ENCODE measurements at regions of chr3 and their contacts with region 1.

Region 1: DNA sequence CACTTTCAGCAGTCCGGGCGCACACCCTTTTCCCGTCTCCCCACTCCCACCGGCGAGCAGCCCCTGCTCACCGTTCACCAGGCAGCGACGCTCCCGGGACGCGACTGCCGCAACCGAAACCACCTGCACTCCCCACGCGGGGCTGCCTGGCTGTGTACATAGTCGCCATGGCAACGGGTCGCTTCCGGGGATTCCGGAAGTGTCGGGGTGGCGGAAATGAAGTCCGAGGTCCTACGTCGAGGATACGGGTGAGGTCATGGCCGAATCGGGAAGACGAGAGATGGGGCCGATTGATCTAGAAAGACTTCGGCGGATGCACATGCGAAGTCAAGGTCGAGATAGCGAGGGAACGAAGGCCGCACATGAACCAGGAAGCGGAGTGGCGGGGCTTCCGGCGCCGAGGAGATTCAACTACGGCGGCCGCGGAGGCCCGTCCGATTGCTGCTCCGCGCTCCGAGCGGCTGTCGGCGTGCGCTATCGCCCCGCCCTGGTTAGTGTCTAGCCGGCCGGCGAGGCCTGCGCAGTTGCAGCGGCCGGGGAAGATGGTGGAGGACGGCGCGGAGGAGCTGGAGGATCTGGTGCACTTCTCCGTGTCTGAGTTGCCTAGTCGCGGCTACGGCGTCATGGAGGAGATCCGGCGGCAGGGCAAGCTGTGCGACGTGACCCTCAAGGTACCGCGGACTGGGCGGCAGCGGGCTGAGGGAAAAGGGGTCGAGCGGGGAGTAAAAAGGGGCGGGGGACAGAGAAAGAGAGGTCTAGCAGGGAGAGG is at the starts of genes KIF9 and KLHL18:
- DNase-seq: peak; percentile 97 to 98
- ATAC-seq: peak; percentile 98
- H3K4me3 ChIP-seq: peak within 1 kb of the TSS; percentile 21 to 65
- H3K27ac ChIP-seq: peak within 1 kb of the TSS; percentile 36 to 88
- H3K4me1 ChIP-seq: no peaks in the 10 kb centered on the region
- H3K27me3 ChIP-seq: no peaks in the 10 kb centered on the region
- total RNA-seq, gene KIF9: 6.5 to 6.7 TPM
- total RNA-seq, gene KLHL18: 22.9 to 26.7 TPM

Region 2: DNA sequence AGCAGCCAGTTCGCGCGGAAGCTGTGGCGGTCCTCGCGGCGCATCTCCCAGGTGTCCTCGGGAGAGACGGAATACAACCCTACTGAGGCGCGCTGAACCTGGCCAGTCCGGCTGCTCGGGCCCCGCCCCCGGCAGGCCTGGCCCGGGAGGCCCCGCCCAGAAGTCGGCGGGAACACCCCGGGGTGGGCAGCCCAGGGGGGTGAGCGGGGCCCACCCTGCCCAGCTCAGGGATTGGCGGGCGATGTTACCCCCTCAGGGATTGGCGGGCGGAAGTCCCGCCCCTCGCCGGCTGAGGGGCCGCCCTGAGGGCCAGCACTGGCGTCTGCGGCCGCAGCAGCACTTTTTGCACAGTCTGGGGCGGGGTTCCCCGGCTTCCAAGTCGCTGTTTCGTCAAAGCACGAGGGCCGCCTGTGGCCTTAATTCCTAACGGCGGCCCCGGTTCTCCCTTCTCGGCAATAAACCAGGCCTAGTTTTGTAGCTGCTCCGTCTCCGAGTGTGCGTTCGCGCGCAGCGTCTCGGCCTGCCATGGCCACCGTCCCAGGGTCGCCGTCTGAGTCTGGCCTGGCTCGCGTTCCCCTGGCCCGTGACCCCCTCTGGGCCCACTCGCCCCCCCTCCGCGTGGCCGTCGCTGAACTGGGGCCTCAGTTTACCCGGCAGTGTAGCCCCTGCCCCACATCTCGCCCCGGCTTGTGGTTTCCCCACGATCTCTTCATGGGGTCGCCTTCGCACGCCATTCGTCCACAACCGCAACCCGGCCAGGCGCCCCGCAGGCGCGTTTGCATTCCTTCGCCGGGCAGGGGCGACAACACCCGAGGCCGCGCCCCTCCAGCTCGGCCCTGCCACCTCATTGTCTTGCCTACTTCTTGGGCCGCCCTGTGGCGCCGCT is 273.1 kb before region 1 on chr3:
- intact Hi-C with region 1: loop called in 1 of 2 experiments (anchors 1 kb)
- DNase-seq: peak; percentile 94 to 95
- ATAC-seq: peak; percentile 95
- H3K4me3 ChIP-seq: peak overlapping the region; percentile 7 to 12
- H3K27ac ChIP-seq: peak overlapping the region in 1 of 2 donors; percentile 83
- H3K4me1 ChIP-seq: no peaks in the 10 kb centered on the region
- H3K27me3 ChIP-seq: no peaks in the 10 kb centered on the region

Region 3: DNA sequence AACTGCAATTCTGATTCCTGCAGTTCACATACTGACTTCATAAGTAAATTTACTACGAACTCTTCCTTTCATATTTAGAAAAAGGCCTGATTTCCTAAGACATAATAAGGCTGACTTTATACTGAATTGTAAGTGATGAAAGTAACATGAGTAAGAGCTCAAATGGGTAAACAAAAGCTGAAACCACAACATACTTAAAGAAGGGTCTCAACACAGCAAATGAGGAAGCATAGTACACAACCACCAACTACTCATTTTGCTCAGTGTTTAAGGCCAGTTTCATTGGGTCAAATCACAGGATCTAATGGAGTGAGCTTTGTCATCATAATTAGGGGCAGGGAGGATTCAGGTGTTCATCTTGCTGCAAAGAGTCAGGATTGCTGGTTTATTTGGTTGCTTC is 200.1 kb before region 1 on chr3:
- intact Hi-C with region 1: no loop called
- DNase-seq: no peak
- ATAC-seq: no peak
- H3K4me3 ChIP-seq: no peak overlapping the region
- H3K27ac ChIP-seq: no peak overlapping the region
- H3K4me1 ChIP-seq: peaks cover 0 to 2% of the 10 kb centered on the region in 2 donors
- H3K27me3 ChIP-seq: no peaks in the 10 kb centered on the region

Region 4: DNA sequence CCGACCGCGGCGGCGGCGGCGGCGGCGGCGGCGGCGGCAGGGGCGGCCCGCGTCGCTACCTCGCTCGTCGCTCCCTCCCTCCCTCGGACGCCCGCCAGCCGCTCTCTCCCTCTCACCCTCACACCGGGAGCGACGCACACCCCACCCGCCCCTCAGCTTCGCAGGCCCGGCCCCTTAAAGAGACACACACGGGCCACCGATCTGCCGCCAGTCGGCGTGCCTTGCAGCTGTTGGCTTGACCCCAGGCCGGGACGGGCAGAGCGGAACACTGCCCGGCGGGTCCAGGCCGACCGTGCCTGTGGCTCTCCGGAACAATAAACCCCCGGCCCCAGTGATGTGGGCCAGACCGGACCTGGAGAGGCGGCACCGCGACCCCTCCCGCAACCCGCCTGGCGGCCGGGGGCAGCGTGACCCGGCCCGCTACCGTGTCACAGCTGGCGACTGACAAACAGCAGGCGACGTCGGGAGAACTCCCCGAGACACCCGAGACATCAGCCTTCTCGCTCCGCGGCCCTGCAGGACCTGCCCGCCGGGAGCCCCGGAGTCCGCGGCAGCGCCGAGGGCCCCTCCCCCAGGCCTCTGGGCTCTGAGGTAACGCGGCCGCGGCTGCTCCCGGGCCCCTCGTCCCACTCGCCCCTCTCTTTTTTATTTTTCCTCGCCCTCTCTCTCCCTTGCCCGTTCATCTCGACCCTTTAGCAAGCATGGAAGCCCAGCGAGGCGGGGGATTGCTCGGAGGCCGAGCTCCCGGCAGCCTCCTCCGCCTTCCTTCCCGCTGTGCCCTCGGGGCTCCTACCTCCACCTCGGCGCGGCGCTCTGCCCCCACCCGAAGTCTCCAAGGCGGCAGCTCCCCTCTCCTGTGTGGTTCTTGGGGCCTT is 118.4 kb before region 1 on chr3 and contains the start of gene SETD2:
- intact Hi-C with region 1: loop called in 1 of 2 experiments (anchors 5 kb)
- DNase-seq: peak; percentile 96 to 98
- ATAC-seq: peak; percentile 97
- H3K4me3 ChIP-seq: peak within 1 kb of the TSS; percentile 94 to 97
- H3K27ac ChIP-seq: peak within 1 kb of the TSS; percentile 85 to 87
- H3K4me1 ChIP-seq: peaks cover 0 to 15% of the 10 kb centered on the region in 2 donors
- H3K27me3 ChIP-seq: no peaks in the 10 kb centered on the region
- total RNA-seq, gene SETD2: 51.8 to 62.5 TPM

Region 5: DNA sequence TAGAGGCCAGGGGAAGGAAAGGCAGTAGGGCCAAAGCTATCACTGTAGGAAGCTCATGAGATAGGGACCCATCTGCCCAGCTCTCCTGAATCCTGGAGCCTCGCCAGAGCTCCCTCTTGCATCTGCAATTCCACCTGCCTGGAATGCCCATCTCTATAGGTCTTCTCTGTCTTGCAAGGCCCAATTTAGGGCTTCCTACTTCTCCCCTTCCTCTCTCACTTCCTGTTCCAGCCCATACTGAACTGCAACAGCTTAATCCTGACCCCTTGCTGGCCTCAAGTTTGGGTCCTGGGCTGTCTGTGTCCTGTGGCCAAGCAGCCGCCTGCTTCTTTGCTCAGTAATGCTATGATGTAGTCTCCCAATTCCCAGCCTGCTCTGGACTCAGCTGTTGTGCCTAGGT is 94.6 kb after region 1 on chr3:
- intact Hi-C with region 1: loop called in 1 of 2 experiments (anchors 5 kb)
- DNase-seq: no peak
- ATAC-seq: no peak
- H3K4me3 ChIP-seq: no peak overlapping the region
- H3K27ac ChIP-seq: no peak overlapping the region
- H3K4me1 ChIP-seq: peaks cover 0 to 2% of the 10 kb centered on the region in 2 donors
- H3K27me3 ChIP-seq: no peaks in the 10 kb centered on the region

Measured in aorta (tissue), 5 donors.